ENCODE measurements at regions of chr2 and their contacts with region 1.

Region 1: DNA sequence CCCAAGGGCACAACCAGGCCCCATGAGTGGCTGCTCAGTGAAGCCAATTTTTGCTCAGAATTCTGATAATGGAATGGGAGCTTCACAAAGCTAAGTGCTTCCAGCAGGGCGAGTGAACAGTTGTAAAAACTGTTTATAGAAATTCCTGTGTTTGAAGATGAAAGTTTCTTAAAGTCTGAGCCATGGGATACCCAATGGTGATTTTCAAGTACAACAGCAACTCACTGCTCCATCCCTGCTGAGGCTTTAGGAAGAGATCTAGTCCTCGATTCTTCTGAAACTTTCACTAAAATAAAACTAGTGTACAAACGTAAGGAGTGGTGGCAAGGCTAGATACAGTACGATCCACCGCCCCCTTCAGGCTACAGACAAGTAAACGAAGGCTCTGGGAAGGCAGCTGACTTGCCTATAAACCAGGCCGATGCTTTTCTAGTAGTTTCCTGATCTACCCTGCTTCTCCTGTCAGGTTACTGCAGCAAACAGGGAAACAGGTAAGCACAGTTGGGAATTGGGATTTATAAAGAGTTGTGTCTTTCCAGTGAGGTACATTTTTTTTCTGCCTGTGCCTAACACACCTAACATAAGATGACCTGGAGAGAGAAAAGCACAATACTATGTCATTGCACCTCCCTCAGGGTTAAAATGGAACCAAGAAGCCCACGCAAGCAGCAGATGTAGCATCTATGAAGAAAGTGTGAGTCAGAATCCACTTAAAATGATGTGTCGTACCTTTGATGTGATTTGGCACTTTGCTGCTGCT is 108.7 kb downstream of the UXS1 start:
- DNase-seq: peak; percentile 52
- H3K4me3 ChIP-seq: no peak overlapping the region
- H3K27ac ChIP-seq: no peak overlapping the region
- H3K4me1 ChIP-seq: no peaks in the 10 kb centered on the region
- H3K27me3 ChIP-seq: peaks cover 4% of the 10 kb centered on the region in 2 experiments
- CTCF ChIP-seq: peak; percentile 18 to 54
- POLR2A ChIP-seq: no peak

Region 2: GRCh38 chr2:105576440-105577252 is 508.7 kb before region 1 on chr2:
- CTCF ChIA-PET with region 1: interaction called, 11 read pairs
- POLR2A ChIA-PET with region 1: no interaction called
- dilution Hi-C with region 1: no loop called
- intact Hi-C with region 1: loop called (anchors 1 kb)
- DNase-seq: peak; percentile 20
- H3K4me3 ChIP-seq: no peak overlapping the region
- H3K27ac ChIP-seq: no peak overlapping the region
- H3K4me1 ChIP-seq: no peaks in the 10 kb centered on the region
- H3K27me3 ChIP-seq: peaks cover 5 to 9% of the 10 kb centered on the region in 2 experiments
- CTCF ChIP-seq: peak; percentile 24 to 34
- POLR2A ChIP-seq: no peak

Region 3: GRCh38 chr2:105919826-105920225 is 165.5 kb before region 1 on chr2:
- CTCF ChIA-PET with region 1: no interaction called
- POLR2A ChIA-PET with region 1: no interaction called
- dilution Hi-C with region 1: no loop called
- intact Hi-C with region 1: loop called (anchors 2 kb)
- DNase-seq: peak; percentile 36
- H3K4me3 ChIP-seq: no peak overlapping the region
- H3K27ac ChIP-seq: no peak overlapping the region
- H3K4me1 ChIP-seq: no peaks in the 10 kb centered on the region
- H3K27me3 ChIP-seq: no peaks in the 10 kb centered on the region
- CTCF ChIP-seq: peak; percentile 35 to 54
- POLR2A ChIP-seq: no peak